Colonic mucosa (tissue), 4 donors: ENCODE measurements at regions of chr1 and their contacts with region 1.

Region 1: GRCh38 chr1:227762233-227762911 is 27.1 kb downstream of the SNAP47 start:
- DNase-seq: peak; percentile 88
- H3K4me3 ChIP-seq: no peak overlapping the region
- H3K27ac ChIP-seq: no peak overlapping the region
- H3K4me1 ChIP-seq: peaks cover 12% of the 10 kb centered on the region
- H3K27me3 ChIP-seq: no peaks in the 10 kb centered on the region
- CTCF ChIP-seq: peak; percentile 86

Region 2: DNA sequence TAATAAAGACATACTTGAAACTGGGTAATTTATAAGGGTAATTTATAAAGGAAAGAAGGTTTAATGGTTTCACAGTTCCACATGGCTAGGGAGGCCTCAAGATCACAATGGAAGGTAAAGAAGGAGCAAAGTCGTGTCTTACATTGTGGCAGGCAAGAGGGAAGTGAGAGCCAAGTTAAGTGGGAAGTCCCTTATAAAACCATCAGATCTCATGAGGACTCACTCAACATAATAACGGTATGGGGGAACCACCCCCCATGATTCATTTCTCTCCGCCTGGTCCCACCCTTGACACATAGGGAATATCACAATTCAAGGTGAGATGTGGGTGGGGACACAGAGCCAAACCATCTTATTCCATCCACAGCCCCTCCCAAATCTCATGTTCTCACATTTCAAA is 275.8 kb before region 1 on chr1:
- intact Hi-C with region 1: loop called (anchors 5 kb)
- DNase-seq: no peak
- H3K4me3 ChIP-seq: no peak overlapping the region
- H3K27ac ChIP-seq: no peak overlapping the region
- H3K4me1 ChIP-seq: no peaks in the 10 kb centered on the region
- H3K27me3 ChIP-seq: no peaks in the 10 kb centered on the region
- CTCF ChIP-seq: no peak

Region 3: DNA sequence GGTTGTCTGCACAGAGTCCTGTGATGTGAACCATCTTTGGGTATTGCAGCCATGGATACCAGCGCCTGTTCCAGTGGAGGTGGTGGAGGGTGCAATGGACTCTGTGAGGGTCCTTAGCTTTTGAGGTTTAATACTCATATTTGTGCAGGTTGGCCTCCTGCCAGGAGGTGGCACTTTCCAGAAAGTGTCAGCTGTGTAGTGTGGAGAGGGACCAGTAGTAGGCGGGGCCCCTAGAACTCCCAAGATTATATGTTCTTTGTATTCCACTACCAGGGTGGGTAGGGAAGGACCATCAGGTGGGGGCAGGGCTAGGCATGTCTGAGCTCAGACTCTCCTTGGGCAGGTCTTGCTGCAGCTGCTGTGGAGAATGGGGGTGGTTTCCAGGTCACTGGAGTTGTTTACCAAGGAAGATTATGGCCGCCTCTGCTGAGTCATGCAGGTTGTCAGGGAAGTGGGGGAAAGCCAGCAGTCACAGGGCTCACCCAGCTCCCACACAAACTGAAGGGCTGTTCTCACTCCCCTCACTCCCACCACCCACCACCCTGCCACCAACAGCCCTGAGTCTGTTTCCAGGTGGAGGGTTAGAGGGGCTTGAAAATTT is 230.3 kb before region 1 on chr1:
- intact Hi-C with region 1: no loop called
- DNase-seq: no peak
- H3K4me3 ChIP-seq: no peak overlapping the region
- H3K27ac ChIP-seq: no peak overlapping the region
- H3K4me1 ChIP-seq: no peaks in the 10 kb centered on the region
- H3K27me3 ChIP-seq: no peaks in the 10 kb centered on the region
- CTCF ChIP-seq: no peak